ENCODE measurements at regions of chr9 and their contacts with region 1.

Region 1: DNA sequence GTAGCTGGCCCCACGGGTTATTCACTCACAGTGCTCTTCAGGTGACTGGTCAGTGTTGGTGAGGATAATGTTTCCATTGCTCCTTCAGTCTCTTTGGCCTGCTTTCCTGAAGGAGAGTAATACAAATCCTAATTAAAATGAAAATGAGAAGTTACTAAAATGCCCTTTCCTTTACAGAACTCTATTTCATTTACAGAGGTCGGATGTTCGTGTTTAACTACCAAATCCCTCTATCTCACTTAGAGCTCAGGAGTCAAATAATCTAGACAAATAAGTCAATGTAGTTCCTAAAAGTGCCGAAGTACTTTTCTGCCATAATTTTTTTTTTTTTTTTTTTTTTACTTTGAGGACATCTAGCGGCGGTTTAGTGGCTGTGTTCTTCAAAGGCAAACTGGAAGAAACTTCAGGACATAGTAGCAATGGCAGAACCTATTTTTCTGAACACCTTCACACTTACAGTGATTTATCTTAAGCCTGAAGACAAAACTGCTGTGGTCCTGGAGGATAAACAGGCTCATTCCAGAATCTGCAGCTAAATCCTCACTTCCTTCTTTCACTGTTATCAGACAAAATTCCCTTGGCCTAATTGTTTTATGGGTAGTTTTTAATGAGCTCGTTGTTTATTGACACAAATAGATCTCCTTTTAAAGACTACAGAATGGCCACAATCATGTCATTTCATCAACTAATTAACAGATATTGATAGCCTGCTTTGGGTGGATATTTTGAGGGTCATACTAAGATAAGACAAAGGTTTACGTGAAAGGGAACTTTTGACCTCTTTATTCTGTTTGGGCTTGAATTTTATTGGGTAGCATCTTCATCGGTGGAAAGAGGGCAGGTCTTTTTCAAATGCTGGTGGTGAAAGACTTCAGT is 207.6 kb upstream of the DMRTA1 start:
- DNase-seq: no peak
- ATAC-seq: no peak
- H3K4me3 Mint-ChIP-seq: no peak overlapping the region
- H3K27ac Mint-ChIP-seq: peak overlapping the region; percentile 48
- H3K4me1 Mint-ChIP-seq: peaks cover 60% of the 10 kb centered on the region
- H3K27me3 Mint-ChIP-seq: peaks cover 1% of the 10 kb centered on the region
- CTCF ChIP-seq: no peak

Region 2: DNA sequence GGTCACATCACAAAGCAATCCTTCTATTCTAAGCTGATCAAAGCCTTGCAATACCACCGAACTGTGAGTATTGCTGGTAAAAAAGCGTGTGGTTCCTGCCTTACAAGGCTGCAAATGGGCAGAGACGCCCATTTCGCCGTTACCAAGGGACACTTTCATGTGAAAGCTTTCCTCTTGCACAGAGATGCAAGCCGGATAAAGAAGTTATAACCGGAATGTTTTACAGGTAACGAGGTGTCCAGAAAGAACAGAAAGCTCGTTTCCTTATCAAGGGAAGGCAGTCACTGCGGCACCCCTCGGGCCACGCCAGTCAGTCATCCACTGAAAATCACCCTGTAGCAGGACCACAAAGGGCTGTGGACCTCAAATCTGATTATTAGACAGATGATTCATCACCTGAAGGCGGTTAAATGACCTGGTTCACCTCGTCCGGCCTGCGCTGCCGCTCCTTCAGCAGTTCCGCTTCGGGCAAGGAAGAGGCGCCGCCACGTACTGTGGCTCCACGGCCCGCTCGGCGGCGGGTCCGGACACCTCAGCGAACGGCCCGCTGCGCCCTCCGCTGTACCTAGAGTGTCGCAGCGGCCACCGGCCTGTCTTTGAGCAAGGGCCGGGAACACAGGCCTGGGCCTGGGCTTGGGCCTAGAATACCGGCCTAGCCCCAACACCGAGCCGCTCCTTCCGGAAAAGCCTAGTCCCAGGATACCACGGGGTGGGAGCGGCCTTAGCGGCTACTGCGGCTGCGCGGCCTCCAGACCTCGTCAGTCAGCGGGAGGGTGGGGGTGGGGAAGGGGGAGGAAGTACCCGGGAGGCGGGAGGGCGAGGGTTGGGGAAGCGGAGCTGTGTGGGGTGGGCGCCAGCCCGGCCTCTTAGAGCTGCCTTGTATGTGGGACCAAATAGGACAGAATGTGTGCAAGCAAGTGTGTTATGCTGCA is 904.1 kb before region 1 on chr9 and contains the start of gene KLHL9:
- CTCF ChIA-PET with region 1: no interaction called
- POLR2A ChIA-PET with region 1: no interaction called
- intact Hi-C with region 1: loop called (anchors 2 kb)
- DNase-seq: peak; percentile 76
- ATAC-seq: peak; percentile 88
- H3K4me3 Mint-ChIP-seq: peak within 1 kb of the TSS; percentile 91
- H3K27ac Mint-ChIP-seq: peak within 1 kb of the TSS; percentile 87
- H3K4me1 Mint-ChIP-seq: peaks cover 50% of the 10 kb centered on the region
- H3K27me3 Mint-ChIP-seq: peaks cover 7% of the 10 kb centered on the region
- CTCF ChIP-seq: no peak
- total RNA-seq, gene KLHL9: 13.1 and 13.8 TPM in 2 replicates

Region 3: DNA sequence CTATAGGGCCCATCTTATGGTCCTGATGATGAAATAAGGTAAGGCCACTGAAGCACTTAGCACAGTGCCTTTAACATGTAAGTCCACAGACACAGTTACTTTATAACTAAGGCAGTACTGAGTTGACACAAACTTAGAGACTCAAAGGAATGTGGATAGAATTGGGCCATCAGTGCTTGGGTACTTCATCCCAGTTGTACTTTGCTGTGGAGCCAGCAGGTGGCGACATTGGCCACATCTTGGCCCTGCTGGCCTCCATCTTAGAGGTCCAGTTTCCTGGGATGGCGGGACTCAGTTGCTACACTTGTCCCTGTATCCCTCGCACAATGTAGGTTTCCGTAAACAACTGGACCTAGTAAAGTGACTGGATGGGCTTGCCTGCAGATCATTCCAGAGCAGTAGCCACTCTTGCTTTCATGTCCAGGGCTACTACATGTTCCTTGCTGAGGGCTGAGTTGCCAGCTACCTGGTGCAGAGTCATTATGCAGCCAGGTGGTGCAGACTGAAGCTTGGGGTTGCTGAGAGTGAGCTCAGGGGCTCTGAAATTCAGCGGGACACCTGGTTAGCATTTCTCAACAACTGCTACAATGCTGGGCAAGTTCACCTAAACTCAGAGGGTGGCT is 426.0 kb before region 1 on chr9:
- CTCF ChIA-PET with region 1: interaction called, 130 read pairs
- POLR2A ChIA-PET with region 1: interaction called, 6 read pairs
- intact Hi-C with region 1: loop called (anchors 1 kb)
- DNase-seq: peak; percentile 64
- ATAC-seq: peak; percentile 83
- H3K4me3 Mint-ChIP-seq: no peak overlapping the region
- H3K27ac Mint-ChIP-seq: no peak overlapping the region
- H3K4me1 Mint-ChIP-seq: peaks cover 27% of the 10 kb centered on the region
- H3K27me3 Mint-ChIP-seq: no peaks in the 10 kb centered on the region
- CTCF ChIP-seq: peak; percentile 85

Region 4: DNA sequence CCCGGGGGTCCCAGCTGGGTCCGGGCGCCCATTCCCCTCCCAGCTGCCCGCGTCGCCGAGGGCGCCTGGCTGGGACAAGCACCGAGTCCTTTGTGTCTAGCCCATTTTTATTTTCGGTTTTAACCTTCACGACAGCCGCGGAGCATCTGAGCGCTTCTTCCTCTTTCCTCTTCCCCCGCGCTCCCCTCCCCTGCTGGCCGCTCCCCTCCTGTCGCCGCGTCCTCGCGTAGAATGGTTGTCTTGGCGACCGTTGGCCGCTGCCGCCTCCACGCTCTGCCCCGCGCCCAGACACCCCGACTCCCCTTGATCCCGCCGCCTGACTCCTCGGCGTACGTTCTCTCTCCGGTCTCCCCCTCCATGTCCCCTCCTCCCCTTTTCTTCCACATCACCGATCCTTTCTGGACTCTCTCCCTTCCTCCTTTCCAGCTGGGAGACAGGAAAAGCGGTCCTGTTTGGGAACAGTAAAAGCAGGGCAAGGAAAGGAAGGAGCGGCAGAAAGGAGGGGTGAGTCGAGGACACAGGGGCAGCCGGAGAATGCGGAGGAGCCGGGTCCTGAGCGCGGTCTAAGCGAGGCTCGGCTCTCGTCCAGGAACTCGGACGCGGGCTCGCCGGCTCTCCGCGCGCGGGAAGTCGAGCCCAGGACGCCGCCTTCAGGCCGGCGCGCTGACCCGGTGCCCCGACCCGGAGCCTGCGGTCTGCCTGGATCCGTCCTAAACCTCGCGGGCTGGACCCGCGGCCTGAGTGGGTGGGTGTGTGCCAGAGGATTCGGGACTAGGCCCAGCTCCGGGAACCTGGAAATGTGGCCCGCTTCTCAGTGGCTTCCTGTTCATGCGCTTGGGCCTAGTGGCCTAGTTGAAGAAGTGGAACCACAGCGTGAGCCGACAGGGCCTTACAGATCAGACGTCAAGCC is 243.6 kb before region 1 on chr9:
- CTCF ChIA-PET with region 1: interaction called, 10 read pairs
- POLR2A ChIA-PET with region 1: interaction called, 5 read pairs
- intact Hi-C with region 1: loop called (anchors 1 kb)
- DNase-seq: peak; percentile 82
- ATAC-seq: peak; percentile 84
- H3K4me3 Mint-ChIP-seq: peak overlapping the region; percentile 98
- H3K27ac Mint-ChIP-seq: peak overlapping the region; percentile 97
- H3K4me1 Mint-ChIP-seq: peaks cover 24% of the 10 kb centered on the region
- H3K27me3 Mint-ChIP-seq: no peaks in the 10 kb centered on the region
- CTCF ChIP-seq: no peak

Region 5: DNA sequence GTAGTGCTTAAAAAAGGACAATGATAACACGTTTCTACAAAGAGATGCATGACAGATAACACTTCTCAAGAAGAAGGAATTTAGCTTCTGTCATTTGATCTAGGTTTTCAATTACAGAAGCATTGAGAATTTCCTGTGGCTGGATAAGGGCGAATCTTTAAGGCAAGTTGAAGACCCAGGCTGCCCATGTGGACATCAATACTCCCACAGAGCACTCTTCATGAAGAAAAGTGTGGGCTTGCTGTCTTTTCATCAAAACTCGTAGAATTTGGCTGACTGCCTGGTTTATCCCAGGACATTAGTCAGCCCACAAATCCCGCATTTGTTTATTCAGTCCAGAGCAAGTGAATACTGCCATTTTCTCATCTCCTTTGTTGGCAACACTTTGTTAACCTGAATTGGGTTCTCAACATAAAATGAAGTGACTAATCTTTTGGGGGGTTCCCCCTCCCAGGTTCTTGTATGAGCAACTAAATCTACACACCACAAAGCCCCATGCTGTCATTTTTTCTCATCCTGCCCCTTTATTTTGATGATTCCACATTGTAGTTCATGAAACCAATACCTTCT is 186.6 kb before region 1 on chr9:
- CTCF ChIA-PET with region 1: interaction called, 13 read pairs
- POLR2A ChIA-PET with region 1: interaction called, 4 read pairs
- intact Hi-C with region 1: loop called (anchors 5 kb)
- DNase-seq: no peak
- ATAC-seq: no peak
- H3K4me3 Mint-ChIP-seq: no peak overlapping the region
- H3K27ac Mint-ChIP-seq: no peak overlapping the region
- H3K4me1 Mint-ChIP-seq: peaks cover 32% of the 10 kb centered on the region
- H3K27me3 Mint-ChIP-seq: no peaks in the 10 kb centered on the region
- CTCF ChIP-seq: no peak

Region 6: DNA sequence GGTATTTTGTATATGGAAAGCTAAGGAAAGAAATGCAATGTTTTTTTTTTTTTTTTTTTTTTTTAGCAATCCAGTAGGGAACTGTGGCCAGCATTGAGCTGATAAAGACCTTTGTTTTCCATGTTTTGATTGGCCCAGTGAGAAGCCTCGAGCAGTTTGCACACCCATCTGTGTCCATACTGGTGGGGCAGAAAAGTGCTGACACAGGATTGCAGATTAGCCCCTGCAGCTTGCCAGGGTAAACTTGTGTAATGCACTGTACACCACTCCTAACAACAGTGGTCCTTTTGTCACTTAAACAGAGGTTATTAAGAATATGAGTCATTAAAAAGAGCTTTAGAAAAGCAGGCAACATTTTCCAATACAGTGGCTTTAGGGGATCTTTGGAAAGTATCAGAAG is 97.1 kb before region 1 on chr9:
- CTCF ChIA-PET with region 1: no interaction called
- POLR2A ChIA-PET with region 1: no interaction called
- intact Hi-C with region 1: no loop called
- DNase-seq: no peak
- ATAC-seq: no peak
- H3K4me3 Mint-ChIP-seq: no peak overlapping the region
- H3K27ac Mint-ChIP-seq: no peak overlapping the region
- H3K4me1 Mint-ChIP-seq: no peaks in the 10 kb centered on the region
- H3K27me3 Mint-ChIP-seq: peaks cover 2% of the 10 kb centered on the region
- CTCF ChIP-seq: no peak

Region 7: DNA sequence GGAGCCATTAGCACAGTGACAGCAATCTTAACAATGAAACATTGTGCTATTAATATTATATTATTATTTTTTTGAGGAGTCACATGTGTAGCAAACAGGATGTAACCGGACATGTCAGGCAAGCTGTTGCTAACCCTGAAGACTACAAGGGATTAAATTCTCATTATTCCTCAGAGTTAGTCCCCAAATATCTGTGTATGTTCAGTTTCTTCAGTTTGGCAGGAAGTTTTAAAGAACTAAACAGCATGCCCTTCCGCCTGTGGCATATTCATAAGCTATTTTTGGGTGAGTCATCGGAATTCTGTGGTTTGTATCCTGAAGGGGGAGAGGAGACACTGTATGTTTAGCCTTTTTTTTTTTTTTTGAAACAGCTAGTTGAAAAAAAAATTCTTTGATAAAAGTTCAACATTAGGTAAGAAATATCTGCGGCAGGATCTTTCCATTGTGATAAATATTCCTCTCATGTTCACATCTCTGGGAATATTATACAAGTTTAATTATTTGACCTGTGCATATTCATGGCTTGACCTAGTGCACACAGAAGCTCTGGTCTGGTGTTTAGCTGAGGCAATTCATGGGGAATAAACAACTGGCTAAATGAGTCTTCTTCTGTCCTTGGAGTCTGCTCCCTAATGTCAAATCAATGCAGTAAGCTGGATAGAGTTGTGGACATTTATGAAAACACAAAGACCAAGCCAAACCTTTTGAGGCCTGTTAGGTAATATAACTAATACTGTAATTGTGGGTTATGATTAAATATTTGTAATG is 27.3 kb before region 1 on chr9:
- CTCF ChIA-PET with region 1: interaction called, 3 read pairs
- POLR2A ChIA-PET with region 1: interaction called, 5 read pairs
- intact Hi-C with region 1: loop called (anchors 2 kb)
- DNase-seq: no peak
- ATAC-seq: no peak
- H3K4me3 Mint-ChIP-seq: no peak overlapping the region
- H3K27ac Mint-ChIP-seq: no peak overlapping the region
- H3K4me1 Mint-ChIP-seq: peaks cover 33% of the 10 kb centered on the region
- H3K27me3 Mint-ChIP-seq: no peaks in the 10 kb centered on the region
- CTCF ChIP-seq: no peak

Measured in activated B cell treated with CpG ODN at 0.5 μM for 24 hours (primary cell).